ENCODE measurements at regions of chr1 and their contacts with region 1.

Region 1: DNA sequence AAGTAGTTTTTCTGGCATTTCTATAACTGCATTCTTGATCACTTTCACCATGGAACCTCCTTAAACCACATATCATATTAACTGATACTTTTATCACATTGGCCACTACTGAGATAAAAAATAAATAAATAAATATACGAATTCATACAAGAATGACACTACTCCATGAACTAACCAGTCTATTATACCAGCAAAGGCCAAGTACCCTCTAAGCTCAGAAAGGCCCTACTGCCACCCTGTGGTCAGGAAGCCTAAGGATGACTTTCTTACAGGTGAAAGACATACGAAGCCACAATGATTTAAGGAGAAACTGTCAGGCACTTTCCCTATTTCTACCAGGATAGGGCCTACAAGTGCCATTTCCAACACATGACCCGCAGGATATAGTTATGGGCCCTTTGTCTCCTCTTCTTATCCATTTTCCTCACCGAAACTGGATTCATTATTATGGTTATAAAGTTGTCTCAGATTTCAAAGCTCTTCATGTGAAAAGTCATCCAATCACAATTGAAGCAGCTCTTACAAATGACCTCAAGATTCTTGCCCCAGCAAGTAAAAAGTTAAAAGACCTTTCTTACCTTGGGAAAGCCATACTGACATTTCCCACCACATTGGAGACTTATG is 23.9 kb downstream of the DNAJC8 start:
- DNase-seq: peak; percentile 57
- ATAC-seq: peak; percentile 99
- H3K4me3 ChIP-seq: no peak overlapping the region
- H3K27ac ChIP-seq: no peak overlapping the region
- H3K4me1 ChIP-seq: no peaks in the 10 kb centered on the region
- H3K27me3 ChIP-seq: no peaks in the 10 kb centered on the region
- CTCF ChIP-seq: peak; percentile 72 to 92 (median 78); a peak in 5 of 6 replicates
- EP300 ChIP-seq: no peak
- POLR2A ChIP-seq: no peak
- RAD21 ChIP-seq: peak; percentile 99

Region 2: GRCh38 chr1:27858072-27858958 is 350.6 kb before region 1 on chr1:
- CTCF ChIA-PET with region 1: interaction called, 25 read pairs
- POLR2A ChIA-PET with region 1: no interaction called
- RAD21 ChIA-PET with region 1: interaction called, 14 read pairs
- SMC1A ChIA-PET with region 1: interaction called, 10 read pairs
- in situ Hi-C with region 1: no loop called
- intact Hi-C with region 1: loop called (anchors 1 kb)
- DNase-seq: no peak
- ATAC-seq: peak; percentile 91
- H3K4me3 ChIP-seq: no peak overlapping the region
- H3K27ac ChIP-seq: no peak overlapping the region
- H3K4me1 ChIP-seq: peaks cover 17% of the 10 kb centered on the region
- H3K27me3 ChIP-seq: no peaks in the 10 kb centered on the region
- CTCF ChIP-seq: peak; percentile 99 to 100 (median 99); a peak in 5 of 6 replicates
- EP300 ChIP-seq: no peak
- POLR2A ChIP-seq: no peak
- RAD21 ChIP-seq: peak; percentile 100

Region 3: GRCh38 chr1:28010969-28011368 is 198.0 kb before region 1 on chr1:
- CTCF ChIA-PET with region 1: no interaction called
- POLR2A ChIA-PET with region 1: interaction called, 3 read pairs
- RAD21 ChIA-PET with region 1: interaction called, 3 read pairs
- SMC1A ChIA-PET with region 1: interaction called, 3 read pairs
- in situ Hi-C with region 1: no loop called
- intact Hi-C with region 1: loop called (anchors 10 kb)
- DNase-seq: no peak
- ATAC-seq: no peak
- H3K4me3 ChIP-seq: no peak overlapping the region
- H3K27ac ChIP-seq: no peak overlapping the region
- H3K4me1 ChIP-seq: no peaks in the 10 kb centered on the region
- H3K27me3 ChIP-seq: no peaks in the 10 kb centered on the region
- CTCF ChIP-seq: no peak
- EP300 ChIP-seq: no peak
- POLR2A ChIP-seq: no peak
- RAD21 ChIP-seq: no peak

Region 4: DNA sequence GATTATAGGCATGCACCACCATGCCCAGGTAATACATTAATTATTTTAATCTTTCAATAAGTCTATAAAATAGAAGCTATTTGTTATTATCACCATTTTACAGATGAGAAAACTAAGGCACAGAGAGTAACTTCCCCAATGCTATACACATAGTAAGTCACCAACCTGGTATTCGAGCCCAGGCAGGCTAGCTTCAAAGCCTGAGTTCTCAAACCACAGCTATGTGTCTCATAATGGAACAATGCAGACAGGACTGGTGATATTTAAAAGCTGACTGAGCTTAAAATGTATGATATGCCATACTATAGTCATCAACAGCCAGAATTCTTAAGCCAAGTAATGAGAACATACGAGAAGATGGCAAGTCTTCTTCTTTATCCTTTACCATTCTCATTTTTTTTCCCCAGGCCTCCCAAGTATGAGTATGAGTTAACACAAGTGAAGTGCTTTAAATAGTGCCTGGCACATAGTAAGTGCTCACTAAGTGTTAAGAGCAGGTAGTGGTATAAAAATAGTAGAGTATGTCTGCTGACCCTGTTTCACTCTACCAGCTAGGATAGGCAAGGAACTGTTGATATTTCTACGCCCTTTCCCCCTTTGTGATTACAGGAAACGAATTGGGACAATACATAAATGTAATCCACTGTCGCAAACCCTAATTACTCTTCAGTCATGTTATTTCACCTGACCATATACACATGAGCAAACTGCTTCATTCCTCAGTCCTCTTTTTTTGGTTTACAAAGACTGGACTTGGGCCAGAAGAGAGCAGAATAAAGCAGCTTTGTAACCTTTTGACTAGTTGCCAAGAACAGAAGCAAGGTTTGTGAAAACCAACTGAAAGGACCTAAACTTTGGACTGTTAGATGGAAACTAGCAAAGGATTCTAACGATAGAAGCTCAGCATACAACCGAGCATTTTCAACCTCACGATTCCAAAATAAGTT is 130.0 kb before region 1 on chr1:
- CTCF ChIA-PET with region 1: interaction called, 317 read pairs
- POLR2A ChIA-PET with region 1: no interaction called
- RAD21 ChIA-PET with region 1: interaction called, 11 read pairs
- SMC1A ChIA-PET with region 1: interaction called, 445 read pairs
- in situ Hi-C with region 1: no loop called
- intact Hi-C with region 1: no loop called
- DNase-seq: no peak
- ATAC-seq: peak; percentile 60
- H3K4me3 ChIP-seq: no peak overlapping the region
- H3K27ac ChIP-seq: no peak overlapping the region
- H3K4me1 ChIP-seq: peaks cover 36% of the 10 kb centered on the region
- H3K27me3 ChIP-seq: no peaks in the 10 kb centered on the region
- CTCF ChIP-seq: no peak
- EP300 ChIP-seq: no peak
- POLR2A ChIP-seq: no peak
- RAD21 ChIP-seq: no peak

Region 5: DNA sequence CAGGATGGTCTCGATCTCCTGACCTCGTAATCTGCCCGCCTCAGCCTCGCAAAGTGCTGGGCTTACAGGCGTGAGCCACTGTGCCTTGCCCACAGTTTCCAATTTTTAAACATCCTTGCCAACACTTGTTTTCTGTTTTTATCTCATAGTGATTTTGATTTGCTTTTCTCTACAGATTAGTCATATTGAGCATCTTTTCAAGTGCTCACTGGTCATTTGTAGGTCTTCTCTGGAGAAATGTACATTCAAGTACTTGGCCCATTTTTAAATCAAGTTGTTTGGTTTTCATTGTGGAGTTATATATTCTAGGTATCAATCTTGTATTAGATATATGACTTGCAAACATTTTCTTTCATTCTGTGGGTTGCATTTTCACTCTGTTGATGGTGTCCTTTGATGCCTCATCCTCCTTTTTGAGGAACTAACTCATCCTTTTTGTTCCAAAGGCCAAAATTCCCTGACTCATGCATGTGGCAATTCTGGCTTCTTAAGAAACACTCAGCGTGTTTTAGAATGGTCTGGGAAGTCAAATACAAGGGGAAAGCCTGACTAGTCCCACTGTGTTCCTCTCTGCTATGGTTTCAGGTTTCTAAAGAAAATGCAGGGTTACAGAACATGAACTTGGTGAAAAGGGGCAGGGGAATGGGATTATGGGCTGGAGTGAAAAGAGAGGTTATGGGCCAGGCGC is 69.8 kb before region 1 on chr1:
- CTCF ChIA-PET with region 1: interaction called, 8 read pairs
- POLR2A ChIA-PET with region 1: interaction called, 4 read pairs
- RAD21 ChIA-PET with region 1: interaction called, 6 read pairs
- SMC1A ChIA-PET with region 1: interaction called, 15 read pairs
- in situ Hi-C with region 1: no loop called
- intact Hi-C with region 1: no loop called
- DNase-seq: no peak
- ATAC-seq: peak; percentile 47
- H3K4me3 ChIP-seq: no peak overlapping the region
- H3K27ac ChIP-seq: no peak overlapping the region
- H3K4me1 ChIP-seq: peaks cover 44% of the 10 kb centered on the region
- H3K27me3 ChIP-seq: no peaks in the 10 kb centered on the region
- CTCF ChIP-seq: no peak
- EP300 ChIP-seq: no peak
- POLR2A ChIP-seq: no peak
- RAD21 ChIP-seq: no peak

Region 6: DNA sequence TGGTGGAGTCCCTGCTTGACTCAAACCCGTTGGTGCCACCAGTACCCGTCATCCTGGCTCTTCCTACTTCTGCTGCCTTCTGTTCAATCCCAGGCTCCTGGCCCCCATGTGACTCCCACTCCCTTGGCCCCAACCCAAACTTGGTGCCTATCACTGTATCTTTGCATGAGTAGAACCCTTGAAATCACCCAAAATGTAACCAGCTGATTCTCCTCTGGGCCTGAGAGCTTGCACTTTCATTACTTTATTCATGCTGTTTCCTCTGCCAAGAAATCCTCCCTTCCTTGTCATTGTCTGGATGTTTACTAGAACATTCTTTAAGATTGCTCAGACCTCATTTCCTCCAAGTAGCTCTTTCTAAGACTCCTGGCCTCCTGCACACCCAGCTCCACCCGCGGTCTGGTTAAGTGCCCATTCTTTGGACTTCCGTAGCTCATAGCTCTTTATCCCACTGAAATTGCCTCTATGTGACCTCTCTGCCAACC is 48.1 kb before region 1 on chr1:
- CTCF ChIA-PET with region 1: interaction called, 10 read pairs
- POLR2A ChIA-PET with region 1: interaction called, 3 read pairs
- RAD21 ChIA-PET with region 1: interaction called, 10 read pairs
- SMC1A ChIA-PET with region 1: interaction called, 3 read pairs
- in situ Hi-C with region 1: no loop called
- intact Hi-C with region 1: no loop called
- DNase-seq: no peak
- ATAC-seq: no peak; the same call in 2 of the 3 replicates
- H3K4me3 ChIP-seq: no peak overlapping the region
- H3K27ac ChIP-seq: no peak overlapping the region
- H3K4me1 ChIP-seq: no peaks in the 10 kb centered on the region; the same call in 1 of the 2 replicates
- H3K27me3 ChIP-seq: no peaks in the 10 kb centered on the region
- CTCF ChIP-seq: no peak
- EP300 ChIP-seq: no peak
- POLR2A ChIP-seq: no peak
- RAD21 ChIP-seq: no peak

Region 7: DNA sequence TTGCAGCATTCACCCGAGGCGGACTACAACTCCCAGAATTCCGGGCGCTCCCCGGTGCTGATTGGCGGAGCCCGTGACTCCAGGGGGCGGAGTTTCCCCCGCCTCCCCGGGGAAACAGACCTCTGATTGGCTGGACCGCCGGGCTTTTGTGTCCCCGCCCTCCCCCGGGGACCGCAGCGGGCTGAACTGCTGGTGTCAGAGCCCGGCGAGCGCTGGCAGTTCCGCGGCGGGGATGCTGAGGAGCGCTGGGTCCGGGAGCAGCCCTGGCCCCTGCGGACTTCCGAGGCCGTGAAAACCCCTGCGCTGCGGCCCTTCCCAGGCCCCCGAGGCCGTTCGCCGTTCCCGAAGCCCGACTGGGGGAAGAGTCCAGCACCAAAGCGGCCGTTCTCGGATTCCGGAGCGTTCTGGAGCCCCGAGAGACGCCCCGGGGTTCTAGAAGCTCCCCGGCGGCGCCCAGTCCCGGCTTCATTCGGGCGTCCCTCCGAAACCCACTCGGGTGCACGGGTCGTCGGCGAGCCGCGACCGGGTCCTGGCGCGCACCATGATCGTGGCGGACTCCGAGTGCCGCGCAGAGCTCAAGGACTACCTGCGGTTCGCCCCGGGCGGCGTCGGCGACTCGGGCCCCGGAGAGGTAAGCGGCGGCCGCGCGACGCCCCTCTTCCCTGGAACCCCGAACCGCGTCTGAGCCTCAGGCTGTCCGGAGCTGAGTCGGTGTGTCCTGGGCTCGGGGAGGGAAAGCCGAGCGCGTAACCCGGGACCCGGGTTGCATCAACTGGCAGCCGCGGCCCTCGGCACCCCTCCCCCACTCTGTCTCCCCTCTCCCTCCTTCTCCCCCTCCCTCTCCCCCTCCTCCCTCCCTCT is 50.6 kb after region 1 on chr1 and contains the start of gene SESN2:
- CTCF ChIA-PET with region 1: no interaction called
- POLR2A ChIA-PET with region 1: no interaction called
- RAD21 ChIA-PET with region 1: no interaction called
- SMC1A ChIA-PET with region 1: no interaction called
- in situ Hi-C with region 1: no loop called
- intact Hi-C with region 1: no loop called
- DNase-seq: peak; percentile 84
- ATAC-seq: peak; percentile 97
- H3K4me3 ChIP-seq: peak within 1 kb of the TSS; percentile 97
- H3K27ac ChIP-seq: peak within 1 kb of the TSS; percentile 55
- H3K4me1 ChIP-seq: peaks cover 5% of the 10 kb centered on the region
- H3K27me3 ChIP-seq: no peaks in the 10 kb centered on the region
- CTCF ChIP-seq: no peak
- EP300 ChIP-seq: no peak
- POLR2A ChIP-seq: peak; percentile 99
- RAD21 ChIP-seq: no peak
- polyA plus RNA-seq, gene SESN2: 1.5 to 2.7 TPM

Region 8: DNA sequence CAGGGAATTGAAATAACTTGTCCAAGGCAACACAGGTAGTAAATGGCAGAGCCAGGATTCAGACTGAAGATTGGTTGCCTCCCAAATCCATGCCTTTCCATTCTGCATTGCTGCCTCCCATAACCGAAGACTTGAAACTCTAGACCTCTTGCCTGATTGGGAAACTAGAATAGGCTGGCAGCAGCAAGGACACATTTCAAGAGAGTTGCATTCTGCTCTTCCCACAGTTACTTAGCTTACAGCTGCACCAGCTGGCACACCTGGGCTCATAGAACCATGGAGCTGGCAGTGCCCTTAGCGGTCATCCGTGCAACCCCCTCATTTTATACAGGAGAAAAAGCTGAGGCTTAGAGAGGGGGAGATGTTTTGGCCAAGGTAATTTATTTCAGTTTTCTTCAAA is 352.0 kb after region 1 on chr1:
- CTCF ChIA-PET with region 1: no interaction called
- POLR2A ChIA-PET with region 1: no interaction called
- RAD21 ChIA-PET with region 1: no interaction called
- SMC1A ChIA-PET with region 1: no interaction called
- in situ Hi-C with region 1: no loop called
- intact Hi-C with region 1: no loop called
- DNase-seq: no peak
- ATAC-seq: no peak
- H3K4me3 ChIP-seq: no peak overlapping the region
- H3K27ac ChIP-seq: no peak overlapping the region
- H3K4me1 ChIP-seq: no peaks in the 10 kb centered on the region
- H3K27me3 ChIP-seq: no peaks in the 10 kb centered on the region
- CTCF ChIP-seq: no peak
- EP300 ChIP-seq: no peak
- POLR2A ChIP-seq: no peak
- RAD21 ChIP-seq: no peak

Region 9: DNA sequence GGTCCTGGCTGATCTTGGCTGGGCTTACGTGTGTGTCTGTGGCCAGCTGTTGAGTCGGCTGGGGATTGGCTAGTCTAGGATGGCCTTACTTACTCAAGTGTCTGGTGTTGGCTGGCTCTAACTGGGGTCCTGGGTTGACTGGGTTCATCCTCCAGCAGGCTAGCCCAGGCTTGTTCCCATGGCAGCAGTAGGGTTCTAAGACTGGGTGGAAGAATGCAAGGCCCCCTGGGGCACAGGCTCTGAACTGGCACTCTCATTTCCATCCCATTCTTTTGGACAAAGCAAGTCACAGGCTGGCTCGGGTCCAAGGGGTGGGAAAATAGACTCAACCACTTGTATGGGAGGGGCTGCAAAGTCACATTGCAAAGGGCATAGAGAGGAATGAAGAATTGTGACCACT is 595.1 kb after region 1 on chr1:
- CTCF ChIA-PET with region 1: no interaction called
- POLR2A ChIA-PET with region 1: no interaction called
- RAD21 ChIA-PET with region 1: no interaction called
- SMC1A ChIA-PET with region 1: no interaction called
- in situ Hi-C with region 1: no loop called
- intact Hi-C with region 1: no loop called
- DNase-seq: no peak
- ATAC-seq: no peak
- H3K4me3 ChIP-seq: no peak overlapping the region
- H3K27ac ChIP-seq: no peak overlapping the region
- H3K4me1 ChIP-seq: no peaks in the 10 kb centered on the region
- H3K27me3 ChIP-seq: no peaks in the 10 kb centered on the region
- CTCF ChIP-seq: no peak
- EP300 ChIP-seq: no peak
- POLR2A ChIP-seq: no peak
- RAD21 ChIP-seq: no peak

Measured in GM12878 (cell line).